ENCODE measurements at regions of chr11 and their contacts with region 1.

Region 1: DNA sequence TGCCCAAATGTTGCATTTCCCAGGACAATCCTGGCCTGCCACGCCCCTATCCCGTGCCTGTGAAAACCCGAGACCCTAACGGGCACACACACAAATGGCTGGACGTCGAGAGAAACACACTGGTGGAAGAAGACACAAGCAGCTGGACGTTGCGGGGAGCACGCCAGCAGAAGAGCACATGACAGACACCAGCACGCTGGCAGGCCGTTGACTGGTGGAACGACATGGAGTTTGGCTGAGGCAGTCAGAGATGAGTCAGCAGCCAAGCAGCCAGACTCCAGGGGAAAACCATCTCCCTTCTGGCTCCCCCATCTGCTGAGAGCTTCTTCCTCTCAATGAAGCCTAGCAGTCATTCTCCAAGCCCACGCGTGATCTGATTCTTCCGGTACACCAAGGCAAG is 606.7 kb upstream of the LRRC4C start:
- DNase-seq: no peak
- H3K27ac ChIP-seq: no peak overlapping the region
- CTCF ChIP-seq: no peak

Region 2: GRCh38 chr11:42098075-42098474 is 32.0 kb after region 1 on chr11:
- CTCF ChIA-PET with region 1: interaction called, 11 read pairs
- POLR2A ChIA-PET with region 1: no interaction called
- DNase-seq: no peak
- H3K27ac ChIP-seq: no peak overlapping the region
- CTCF ChIP-seq: no peak

Measured in RWPE1 (cell line).